ENCODE measurements at regions of chr16 and their contacts with region 1.

Region 1: DNA sequence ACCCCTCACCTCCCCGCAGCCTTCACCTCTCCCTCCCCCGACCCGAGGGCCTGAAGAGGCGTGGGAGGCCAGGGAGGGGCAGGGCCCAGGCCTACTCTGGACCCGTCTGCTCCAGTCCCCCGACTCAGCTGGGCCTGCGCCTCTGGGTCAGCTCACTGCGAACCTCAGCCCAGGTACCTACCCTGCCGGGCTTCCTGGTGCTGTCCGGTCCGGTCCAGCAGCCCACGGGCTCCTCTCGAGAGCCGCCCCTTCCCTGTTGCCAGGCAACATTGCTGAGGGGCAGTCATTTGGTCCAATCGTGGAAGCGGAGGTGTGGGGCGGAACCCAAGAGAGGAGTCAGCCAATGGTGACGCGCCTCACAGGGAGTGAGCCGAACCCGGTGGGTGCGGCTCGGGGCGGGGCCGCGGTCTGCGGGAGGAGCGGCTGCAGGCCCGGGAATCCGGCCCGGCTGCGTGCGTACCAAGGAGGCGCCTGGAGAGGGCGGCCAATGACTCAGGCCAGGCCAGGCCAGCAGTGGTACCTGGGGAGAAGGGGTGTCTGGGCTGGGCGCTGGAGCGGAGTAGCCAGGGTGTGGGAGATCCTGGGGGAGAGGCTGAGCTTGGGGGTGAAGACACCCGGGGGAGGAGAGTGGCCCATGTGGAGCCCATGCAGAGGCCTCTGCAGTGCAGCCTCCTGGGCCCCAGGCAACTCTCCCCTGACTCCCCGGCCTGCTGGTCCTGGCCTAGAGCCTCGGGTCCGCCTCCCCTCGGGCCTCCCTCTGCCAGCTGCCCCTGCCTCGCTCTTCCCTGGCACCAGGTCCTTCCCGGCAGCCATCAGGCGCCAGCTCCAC is at the start of gene MEAK7:
- H3K4me3 ChIP-seq: peak within 1 kb of the TSS; percentile 87
- H3K27ac ChIP-seq: peak within 1 kb of the TSS; percentile 42; the same call in 1 of the 2 replicates
- H3K4me1 ChIP-seq: peaks cover 10% of the 10 kb centered on the region
- CTCF ChIP-seq: peak; percentile 52

Region 2: DNA sequence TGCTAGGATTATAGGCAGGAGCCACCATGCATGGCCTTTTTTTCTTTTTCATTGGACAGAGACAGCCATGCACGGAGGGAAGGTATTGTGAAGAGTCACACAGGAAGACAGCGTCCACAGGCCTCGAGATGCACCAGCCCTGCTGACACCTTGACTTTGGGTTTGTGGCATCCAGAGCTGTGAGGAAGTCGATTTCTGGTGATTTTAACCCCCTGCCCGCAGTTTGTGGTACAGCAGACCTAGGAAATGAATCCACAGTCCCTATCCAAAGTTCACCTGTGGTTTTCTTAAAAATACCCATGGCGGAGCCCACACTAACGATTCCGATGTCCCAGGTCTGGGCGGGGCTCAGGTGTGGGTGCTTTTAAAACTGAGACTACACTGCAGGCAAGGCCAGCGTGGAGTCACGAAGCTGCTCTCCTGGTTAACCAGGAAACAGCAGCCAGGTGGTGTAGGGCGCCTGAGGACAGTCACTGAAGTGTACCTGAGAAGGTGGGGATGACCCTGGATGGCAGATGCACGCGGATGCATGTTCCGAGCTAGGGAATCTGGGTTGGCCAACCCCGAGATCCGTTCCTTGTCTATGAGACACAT is 14.2 kb after region 1 on chr16:
- CTCF ChIA-PET with region 1: interaction called, 29 read pairs
- POLR2A ChIA-PET with region 1: no interaction called
- H3K4me3 ChIP-seq: no peak overlapping the region
- H3K27ac ChIP-seq: no peak overlapping the region
- H3K4me1 ChIP-seq: no peaks in the 10 kb centered on the region
- CTCF ChIP-seq: no peak

Region 3: DNA sequence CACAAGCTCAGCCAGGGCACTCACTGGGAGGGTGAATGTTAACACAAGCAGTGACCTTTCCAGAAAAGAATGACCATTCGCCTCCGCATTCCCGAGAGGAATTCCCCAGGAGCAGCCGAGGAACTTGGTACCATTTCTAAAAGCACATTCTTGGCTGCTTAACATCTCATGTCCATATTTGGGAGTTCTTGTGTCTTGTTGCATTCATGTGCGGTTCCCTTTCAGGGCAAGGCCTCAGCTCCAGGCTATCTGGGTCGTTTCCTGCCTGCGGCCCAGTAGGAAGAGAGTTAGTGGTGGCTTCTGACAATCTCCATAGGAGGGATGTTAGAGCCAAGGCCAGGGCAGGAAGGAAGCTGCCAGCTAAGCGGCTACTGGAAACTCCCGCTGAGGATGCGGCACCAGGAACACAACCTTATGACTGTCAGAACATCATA is 27.7 kb after region 1 on chr16:
- CTCF ChIA-PET with region 1: interaction called, 17 read pairs
- POLR2A ChIA-PET with region 1: no interaction called
- H3K4me3 ChIP-seq: no peak overlapping the region
- H3K27ac ChIP-seq: no peak overlapping the region
- H3K4me1 ChIP-seq: no peaks in the 10 kb centered on the region
- CTCF ChIP-seq: no peak